ENCODE measurements at regions of chr10 and their contacts with region 1.

Region 1: GRCh38 chr10:56823849-56824248 is 462.8 kb upstream of the ZWINT start:
- DNase-seq: no peak
- ATAC-seq: no peak
- H3K4me3 Mint-ChIP-seq: no peak overlapping the region
- H3K27ac Mint-ChIP-seq: no peak overlapping the region
- H3K4me1 Mint-ChIP-seq: no peaks in the 10 kb centered on the region
- H3K27me3 Mint-ChIP-seq: no peaks in the 10 kb centered on the region
- CTCF ChIP-seq: no peak

Region 2: DNA sequence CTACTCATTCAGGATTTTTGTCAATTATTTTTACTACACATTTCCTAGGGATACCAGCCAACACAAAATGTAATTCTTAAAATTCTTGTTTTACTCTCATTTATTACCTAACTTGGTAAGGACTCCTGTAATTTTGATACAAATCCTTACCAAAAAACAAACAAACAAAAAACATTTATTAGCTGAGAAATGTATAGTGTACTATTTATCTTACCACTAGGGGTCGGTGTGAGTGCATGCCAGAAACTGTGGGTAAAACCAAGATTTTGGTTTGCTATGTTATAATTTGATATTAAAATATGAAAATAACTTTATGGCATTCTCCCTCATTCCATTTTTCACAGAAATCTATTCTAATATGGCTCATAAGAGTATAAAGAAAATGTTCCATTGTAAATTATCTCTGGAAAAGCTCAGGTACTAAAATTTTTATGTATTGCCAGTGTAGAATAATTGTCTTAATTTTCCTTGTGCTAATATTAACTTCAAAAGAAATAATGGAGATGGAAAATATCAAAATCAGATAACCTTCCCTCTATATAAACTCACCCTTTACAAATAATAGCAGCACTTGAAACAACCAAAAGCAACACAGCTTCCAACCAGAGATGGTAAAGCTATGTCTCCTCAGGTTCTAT is 1732.0 kb before region 1 on chr10:
- CTCF ChIA-PET with region 1: no interaction called
- POLR2A ChIA-PET with region 1: no interaction called
- intact Hi-C with region 1: loop called (anchors 2 kb)
- DNase-seq: no peak
- ATAC-seq: no peak
- H3K4me3 Mint-ChIP-seq: no peak overlapping the region
- H3K27ac Mint-ChIP-seq: no peak overlapping the region
- H3K4me1 Mint-ChIP-seq: no peaks in the 10 kb centered on the region
- H3K27me3 Mint-ChIP-seq: no peaks in the 10 kb centered on the region
- CTCF ChIP-seq: no peak

Region 3: GRCh38 chr10:56782503-56782902 is 41.3 kb before region 1 on chr10:
- CTCF ChIA-PET with region 1: no interaction called
- POLR2A ChIA-PET with region 1: no interaction called
- intact Hi-C with region 1: no loop called
- DNase-seq: no peak
- ATAC-seq: no peak
- H3K4me3 Mint-ChIP-seq: no peak overlapping the region
- H3K27ac Mint-ChIP-seq: no peak overlapping the region
- H3K4me1 Mint-ChIP-seq: no peaks in the 10 kb centered on the region
- H3K27me3 Mint-ChIP-seq: no peaks in the 10 kb centered on the region
- CTCF ChIP-seq: no peak